GM13977 (cell line): ENCODE measurements at regions of chr2 and their contacts with region 1.

Region 1: DNA sequence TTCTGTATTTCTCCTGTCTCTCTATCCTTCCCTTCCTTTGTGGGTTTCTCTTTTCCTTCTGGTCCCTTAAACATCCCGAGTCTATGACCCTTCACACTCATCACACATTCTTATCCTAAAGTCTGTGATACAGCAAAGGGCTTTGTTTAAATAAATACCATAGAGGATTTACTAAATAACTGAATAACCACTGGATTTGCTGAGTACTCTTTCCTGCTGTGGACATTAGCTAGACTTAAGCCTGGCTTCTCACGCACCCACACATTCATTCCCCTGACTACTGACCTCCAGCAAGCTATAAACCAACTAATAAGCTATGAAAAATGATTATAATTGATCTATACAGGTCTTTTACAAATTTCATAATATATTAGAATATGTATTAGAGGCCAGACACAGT is 76.6 kb downstream of the COL4A3 start:
- DNase-seq: no peak
- CTCF ChIP-seq: no peak

Region 2: GRCh38 chr2:227132986-227133385 is 108.0 kb before region 1 on chr2:
- in situ Hi-C with region 1: loop called (anchors 5 kb)
- DNase-seq: no peak
- CTCF ChIP-seq: no peak